Esophagus muscularis mucosa (tissue), 4 donors: ENCODE measurements at regions of chr3 and their contacts with region 1.

Region 1: GRCh38 chr3:37210230-37210629 is 35.8 kb upstream of the LRRFIP2 start:
- DNase-seq: no peak
- H3K4me3 ChIP-seq: no peak overlapping the region
- H3K27ac ChIP-seq: no peak overlapping the region
- H3K4me1 ChIP-seq: peaks cover 2 to 20% (median 6%) of the 10 kb centered on the region in 4 donors
- H3K27me3 ChIP-seq: no peaks in the 10 kb centered on the region
- CTCF ChIP-seq: no peak
- EP300 ChIP-seq: no peak
- POLR2A ChIP-seq: no peak

Region 2: DNA sequence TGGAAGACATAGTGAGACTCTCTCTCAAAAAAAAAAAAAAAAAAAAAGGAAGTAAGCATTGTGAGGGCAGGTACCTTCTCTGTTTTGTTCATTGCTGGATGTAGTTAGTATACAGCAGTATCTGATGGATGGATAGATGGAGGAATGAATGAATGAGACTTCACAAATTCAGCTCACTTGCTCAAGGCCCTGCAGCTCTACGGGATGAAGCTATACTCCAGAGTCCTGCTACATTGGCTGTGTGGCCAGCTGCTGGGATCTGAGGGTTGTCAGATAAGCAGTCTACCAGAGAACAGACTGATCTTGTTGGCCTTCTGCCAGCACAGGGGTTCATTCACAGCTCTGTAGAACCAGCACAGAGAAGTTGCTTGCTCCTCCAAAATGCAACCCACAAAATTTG is 181.9 kb before region 1 on chr3:
- intact Hi-C with region 1: loop called (anchors 5 kb)
- DNase-seq: no peak
- H3K4me3 ChIP-seq: no peak overlapping the region
- H3K27ac ChIP-seq: no peak overlapping the region
- H3K4me1 ChIP-seq: peaks cover 32 to 44% (median 34%) of the 10 kb centered on the region in 4 donors
- H3K27me3 ChIP-seq: no peaks in the 10 kb centered on the region
- CTCF ChIP-seq: no peak
- EP300 ChIP-seq: no peak
- POLR2A ChIP-seq: no peak